ENCODE measurements at regions of chr5 and their contacts with region 1.

Region 1: DNA sequence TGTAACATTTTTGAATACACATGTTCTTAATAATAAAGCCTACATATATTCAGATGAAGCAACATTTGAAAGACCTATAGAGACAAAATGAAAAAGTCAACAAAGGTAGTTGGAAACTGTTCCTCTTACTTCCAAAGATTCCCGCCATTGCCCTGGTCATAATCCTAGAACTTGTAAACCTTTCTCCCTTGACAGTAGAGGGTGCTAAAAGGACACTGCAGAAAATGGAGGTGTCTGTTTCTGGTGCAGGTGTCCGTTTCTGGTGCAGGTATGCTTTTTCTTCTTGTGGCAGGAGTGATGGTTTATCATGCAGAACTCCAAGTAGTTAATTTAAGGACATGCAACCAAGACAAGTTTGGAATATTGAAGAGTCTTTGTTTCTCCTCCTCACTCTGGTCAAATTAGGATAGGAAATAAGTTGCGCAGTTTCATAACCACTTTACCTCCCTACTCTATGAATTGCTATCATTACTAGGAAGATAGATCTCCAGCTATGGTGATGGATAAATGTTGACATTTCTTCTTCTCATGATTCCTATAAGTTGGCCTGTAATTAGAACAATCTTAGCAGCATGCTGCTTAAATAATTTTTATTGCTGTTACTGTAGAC is 56.0 kb upstream of the FAM174A start:
- DNase-seq: peak in 4 of 14 experiments; percentile 5 to 49 (median 44)
- ATAC-seq: no peak
- H3K4me3 ChIP-seq: no peak overlapping the region
- H3K4me3 Mint-ChIP-seq: no peak overlapping the region
- H3K27ac ChIP-seq: no peak overlapping the region
- H3K27ac Mint-ChIP-seq: no peak overlapping the region
- H3K4me1 ChIP-seq: no peaks in the 10 kb centered on the region
- H3K4me1 Mint-ChIP-seq: no peaks in the 10 kb centered on the region
- H3K27me3 ChIP-seq: no peaks in the 10 kb centered on the region
- H3K27me3 Mint-ChIP-seq: no peaks in the 10 kb centered on the region
- CTCF ChIP-seq: peak; percentile 54

Region 2: GRCh38 chr5:99032234-99033013 is 1446.8 kb before region 1 on chr5:
- CTCF ChIA-PET with region 1: no interaction called
- POLR2A ChIA-PET with region 1: no interaction called
- intact Hi-C with region 1: no loop called
- DNase-seq: peak in 9 of 14 experiments; percentile 5 to 67 (median 21)
- ATAC-seq: peak; percentile 25
- H3K4me3 ChIP-seq: peak overlapping the region; percentile 56
- H3K4me3 Mint-ChIP-seq: peak overlapping the region; percentile 90
- H3K27ac ChIP-seq: peak overlapping the region; percentile 29 to 91
- H3K27ac Mint-ChIP-seq: peak overlapping the region; percentile 94
- H3K4me1 ChIP-seq: peaks cover 25% of the 10 kb centered on the region
- H3K4me1 Mint-ChIP-seq: peaks cover 78% of the 10 kb centered on the region
- H3K27me3 ChIP-seq: no peaks in the 10 kb centered on the region
- H3K27me3 Mint-ChIP-seq: no peaks in the 10 kb centered on the region
- CTCF ChIP-seq: peak; percentile 53

Region 3: GRCh38 chr5:101977729-101978345 is 1498.7 kb after region 1 on chr5:
- CTCF ChIA-PET with region 1: no interaction called
- POLR2A ChIA-PET with region 1: no interaction called
- intact Hi-C with region 1: loop called in 1 of 2 experiments (anchors 5 kb)
- DNase-seq: peak in 3 of 14 experiments; percentile 13 to 21 (median 14)
- ATAC-seq: no peak
- H3K4me3 ChIP-seq: no peak overlapping the region
- H3K4me3 Mint-ChIP-seq: no peak overlapping the region
- H3K27ac ChIP-seq: no peak overlapping the region
- H3K27ac Mint-ChIP-seq: no peak overlapping the region
- H3K4me1 ChIP-seq: no peaks in the 10 kb centered on the region
- H3K4me1 Mint-ChIP-seq: no peaks in the 10 kb centered on the region
- H3K27me3 ChIP-seq: no peaks in the 10 kb centered on the region
- H3K27me3 Mint-ChIP-seq: no peaks in the 10 kb centered on the region
- CTCF ChIP-seq: peak; percentile 42

Measured in CD4-positive, alpha-beta T cell (primary cell).